ENCODE measurements at regions of chr15 and their contacts with region 1.

Region 1: GRCh38 chr15:91919014-91919534 is 65.6 kb downstream of the SLCO3A1 start:
- DNase-seq: peak; percentile 77
- ATAC-seq: peak; percentile 77

Region 2: GRCh38 chr15:91867581-91868026 is 51.5 kb before region 1 on chr15:
- intact Hi-C with region 1: loop called (anchors 2 kb)
- DNase-seq: peak; percentile 78
- ATAC-seq: peak; percentile 64

Region 3: GRCh38 chr15:92247649-92248242 is 328.7 kb after region 1 on chr15:
- intact Hi-C with region 1: no loop called
- DNase-seq: no peak
- ATAC-seq: no peak

Region 4: GRCh38 chr15:93543094-93543493 is 1624.0 kb after region 1 on chr15:
- intact Hi-C with region 1: no loop called
- DNase-seq: no peak
- ATAC-seq: no peak